Astrocyte of the cerebellum (primary cell): ENCODE measurements at regions of chr12 and their contacts with region 1.

Region 1: GRCh38 chr12:47779301-47779942 is 6.4 kb downstream of the SLC48A1 start:
- DNase-seq: peak; percentile 73
- H3K4me3 ChIP-seq: no peak overlapping the region
- CTCF ChIP-seq: peak; percentile 95

Region 2: GRCh38 chr12:47715393-47715876 is 64.0 kb before region 1 on chr12:
- in situ Hi-C with region 1: loop called (anchors 10 kb)
- DNase-seq: peak; percentile 58
- H3K4me3 ChIP-seq: no peak overlapping the region
- CTCF ChIP-seq: peak; percentile 79